Mammary epithelial cell (primary cell): ENCODE measurements at regions of chr6 and their contacts with region 1.

Region 1: GRCh38 chr6:129748212-129748900 is 38.4 kb upstream of the ARHGAP18 start:
- DNase-seq: peak; percentile 70
- H3K4me3 ChIP-seq: no peak overlapping the region
- H3K27ac ChIP-seq: peak overlapping the region; percentile 91
- H3K4me1 ChIP-seq: peaks cover 43% of the 10 kb centered on the region
- H3K27me3 ChIP-seq: no peaks in the 10 kb centered on the region
- CTCF ChIP-seq: peak in 1 of 2 donors; percentile 42

Region 2: GRCh38 chr6:129140526-129140925 is 607.8 kb before region 1 on chr6:
- CTCF ChIA-PET with region 1: no interaction called
- dilution Hi-C with region 1: no loop called
- in situ Hi-C with region 1: no loop called
- intact Hi-C with region 1: no loop called
- DNase-seq: no peak
- H3K4me3 ChIP-seq: no peak overlapping the region
- H3K27ac ChIP-seq: no peak overlapping the region
- H3K4me1 ChIP-seq: no peaks in the 10 kb centered on the region
- H3K27me3 ChIP-seq: no peaks in the 10 kb centered on the region
- CTCF ChIP-seq: no peak

Region 3: DNA sequence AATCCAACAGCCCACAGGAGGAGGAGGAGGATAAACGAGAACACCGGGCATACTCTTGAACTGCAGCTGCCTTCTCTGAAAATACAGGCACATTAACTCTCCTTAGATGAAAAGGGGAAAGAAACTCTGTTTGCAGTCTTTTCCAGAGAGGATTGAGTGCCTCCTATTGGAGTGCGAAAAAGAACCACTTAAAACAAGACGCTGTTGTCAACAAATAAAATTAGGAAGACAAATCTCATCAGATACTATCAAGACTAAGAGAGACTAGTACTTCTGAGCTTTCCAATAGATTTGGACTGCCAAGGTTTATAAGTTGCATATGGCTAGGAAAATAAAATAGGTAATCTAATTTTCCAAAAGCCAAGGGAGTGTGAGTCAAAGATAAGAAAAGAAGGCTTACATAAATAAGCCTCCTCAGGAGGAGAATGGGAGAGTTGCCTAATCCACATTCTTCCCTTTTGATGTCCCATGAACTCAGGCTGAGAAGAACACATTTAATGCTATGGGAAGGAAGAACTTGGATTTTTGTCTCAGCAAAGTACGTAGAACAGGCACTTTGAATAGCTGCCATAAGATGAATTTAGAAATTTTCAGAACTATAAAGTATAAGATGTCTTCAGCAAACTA is 193.0 kb before region 1 on chr6:
- CTCF ChIA-PET with region 1: no interaction called
- dilution Hi-C with region 1: no loop called
- in situ Hi-C with region 1: no loop called
- intact Hi-C with region 1: no loop called
- DNase-seq: no peak
- H3K4me3 ChIP-seq: no peak overlapping the region
- H3K27ac ChIP-seq: no peak overlapping the region
- H3K4me1 ChIP-seq: no peaks in the 10 kb centered on the region
- H3K27me3 ChIP-seq: no peaks in the 10 kb centered on the region
- CTCF ChIP-seq: no peak

Region 4: GRCh38 chr6:129683601-129684322 is 64.6 kb before region 1 on chr6:
- CTCF ChIA-PET with region 1: no interaction called
- dilution Hi-C with region 1: no loop called
- in situ Hi-C with region 1: no loop called
- intact Hi-C with region 1: loop called (anchors 2 kb)
- DNase-seq: peak; percentile 93
- H3K4me3 ChIP-seq: peak overlapping the region in 2 of 3 experiments; percentile 21 to 28
- H3K27ac ChIP-seq: peak overlapping the region; percentile 76
- H3K4me1 ChIP-seq: peaks cover 86% of the 10 kb centered on the region
- H3K27me3 ChIP-seq: no peaks in the 10 kb centered on the region
- CTCF ChIP-seq: no peak